ENCODE measurements at regions of chr1 and their contacts with region 1.

Region 1: DNA sequence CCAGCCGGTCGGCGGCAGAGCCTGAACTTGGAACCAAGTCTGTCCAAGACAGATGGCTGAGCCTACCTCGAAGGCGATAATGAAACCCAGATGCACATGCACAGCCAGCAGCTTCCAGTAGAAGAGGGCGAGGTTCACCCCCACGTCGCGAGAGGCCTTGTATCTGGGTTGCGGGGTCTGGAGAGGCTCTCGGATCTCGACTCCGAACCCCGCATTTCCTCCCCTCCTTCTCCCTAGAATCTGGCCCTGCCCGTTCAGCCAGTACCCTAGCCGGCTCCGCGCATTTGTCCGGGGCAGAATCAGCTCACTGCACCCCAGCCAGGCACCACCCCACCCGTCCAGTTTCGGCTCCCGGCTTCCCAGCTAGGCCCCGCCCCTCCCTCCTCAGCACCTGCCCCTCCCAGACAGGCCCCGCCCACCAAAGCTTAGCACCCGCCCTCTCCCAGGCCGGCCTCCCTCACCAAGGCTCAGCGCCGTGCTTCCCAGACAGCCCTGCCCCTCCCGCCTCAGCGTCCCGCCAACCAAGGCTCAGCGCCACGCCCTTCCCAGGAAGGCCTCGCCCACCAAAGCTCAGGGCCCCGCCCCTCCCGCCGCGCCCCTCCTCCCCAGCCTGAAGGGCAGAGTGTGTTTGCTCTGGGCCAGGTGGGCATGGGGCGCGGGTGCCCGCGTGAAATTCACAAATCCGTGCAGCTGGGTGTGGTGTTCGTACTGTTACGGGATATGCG is 4.8 kb upstream of the ARHGEF19 start:
- DNase-seq: peak; percentile 84 to 98 (median 93)
- ATAC-seq: peak; percentile 97
- H3K4me3 ChIP-seq: peak overlapping the region; percentile 74
- H3K4me3 Mint-ChIP-seq: peak overlapping the region; percentile 89
- H3K27ac ChIP-seq: no peak overlapping the region
- H3K27ac Mint-ChIP-seq: peak overlapping the region; percentile 50
- H3K4me1 ChIP-seq: peaks cover 28% of the 10 kb centered on the region
- H3K4me1 Mint-ChIP-seq: peaks cover 29% of the 10 kb centered on the region
- H3K27me3 ChIP-seq: peaks cover 0 to 2% of the 10 kb centered on the region in 2 experiments
- H3K27me3 Mint-ChIP-seq: no peaks in the 10 kb centered on the region
- CTCF ChIP-seq: no peak

Region 2: DNA sequence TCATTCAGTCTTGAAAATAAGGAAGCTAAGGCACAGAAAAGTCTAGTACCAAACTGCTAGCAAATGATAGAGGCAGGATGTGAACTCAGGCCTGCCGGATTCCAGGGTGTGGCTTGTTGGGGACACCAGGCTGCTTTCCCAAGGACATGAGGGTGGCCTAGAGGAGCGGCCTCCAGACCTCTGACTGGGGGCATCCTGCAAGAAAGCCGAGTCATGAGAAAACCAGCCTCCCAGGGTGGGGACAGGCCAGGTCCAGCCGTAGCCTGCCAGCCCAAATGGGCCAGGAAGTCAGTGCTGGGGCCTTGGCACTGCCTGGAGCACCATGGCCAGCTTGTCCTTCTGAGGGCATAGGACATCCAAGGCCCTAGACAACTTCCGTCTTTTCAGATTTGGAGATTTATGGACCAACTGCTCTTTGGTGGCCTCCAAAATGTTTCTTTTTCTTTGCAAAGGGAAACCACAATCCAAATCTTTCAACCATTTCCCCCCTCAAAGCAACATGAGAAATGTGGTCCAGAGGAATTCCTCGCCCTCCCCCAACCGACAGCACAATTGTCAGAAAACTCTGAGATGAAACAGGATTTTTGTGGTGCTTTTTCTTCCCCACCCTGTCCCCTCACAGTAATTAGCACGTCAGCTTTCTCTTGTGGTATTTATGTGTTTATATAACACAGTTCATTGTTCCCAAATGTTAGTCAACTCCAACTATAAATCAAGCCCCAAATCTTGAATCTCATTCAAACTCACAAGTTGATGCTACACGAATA is 1406.4 kb before region 1 on chr1:
- CTCF ChIA-PET with region 1: no interaction called
- POLR2A ChIA-PET with region 1: no interaction called
- intact Hi-C with region 1: no loop called
- DNase-seq: no peak
- ATAC-seq: no peak
- H3K4me3 ChIP-seq: no peak overlapping the region
- H3K4me3 Mint-ChIP-seq: no peak overlapping the region
- H3K27ac ChIP-seq: no peak overlapping the region
- H3K27ac Mint-ChIP-seq: no peak overlapping the region
- H3K4me1 ChIP-seq: no peaks in the 10 kb centered on the region
- H3K4me1 Mint-ChIP-seq: no peaks in the 10 kb centered on the region
- H3K27me3 ChIP-seq: peaks cover 0 to 3% of the 10 kb centered on the region in 2 experiments
- H3K27me3 Mint-ChIP-seq: no peaks in the 10 kb centered on the region
- CTCF ChIP-seq: no peak

Region 3: DNA sequence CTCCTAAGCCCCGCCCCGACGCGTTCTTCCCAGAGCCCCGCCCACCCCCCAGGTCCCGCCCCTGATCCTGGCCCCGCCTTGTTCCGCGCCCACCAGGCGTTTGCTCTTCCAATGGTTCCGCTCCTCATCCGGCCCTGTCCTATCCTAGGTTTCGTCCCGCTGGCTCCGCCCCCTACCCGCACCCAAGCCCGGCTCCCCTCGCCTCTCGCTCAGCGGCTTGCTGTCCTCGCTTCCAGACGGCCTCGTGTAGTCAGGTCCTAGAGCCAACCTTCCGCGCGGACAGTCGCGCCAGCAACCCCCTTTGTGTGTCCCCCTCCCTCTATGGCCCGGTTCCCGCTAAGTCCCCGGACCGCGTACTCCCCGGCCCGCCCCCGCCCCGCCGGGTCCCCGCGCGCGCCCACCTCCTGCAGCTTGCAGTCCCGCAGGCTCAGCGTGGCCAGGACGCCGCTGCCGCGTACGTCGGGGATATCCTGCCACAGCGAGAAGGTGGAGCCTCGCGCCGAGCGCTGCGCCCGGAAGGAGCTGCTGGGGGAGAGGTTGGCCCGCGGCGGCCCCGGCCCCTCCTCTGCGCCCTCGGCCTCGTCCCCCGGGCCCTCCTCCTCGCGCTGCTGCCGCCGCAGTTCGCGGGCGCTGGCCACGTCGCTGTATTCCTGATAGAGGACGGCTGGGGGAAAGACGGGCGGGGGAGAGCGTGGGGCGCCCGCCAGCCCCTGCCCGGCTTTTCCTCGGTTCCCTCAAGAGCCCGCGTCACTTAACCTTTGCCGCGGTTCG is 10.5 kb before region 1 on chr1:
- CTCF ChIA-PET with region 1: interaction called, 4 read pairs
- POLR2A ChIA-PET with region 1: interaction called, 46 read pairs
- intact Hi-C with region 1: loop called in 1 of 2 experiments (anchors 1 kb)
- DNase-seq: peak; percentile 85 to 98 (median 91)
- ATAC-seq: peak; percentile 88
- H3K4me3 ChIP-seq: peak overlapping the region; percentile 75
- H3K4me3 Mint-ChIP-seq: peak overlapping the region; percentile 93
- H3K27ac ChIP-seq: peak overlapping the region; percentile 60 to 86
- H3K27ac Mint-ChIP-seq: peak overlapping the region; percentile 95
- H3K4me1 ChIP-seq: peaks cover 25% of the 10 kb centered on the region
- H3K4me1 Mint-ChIP-seq: peaks cover 12% of the 10 kb centered on the region
- H3K27me3 ChIP-seq: no peaks in the 10 kb centered on the region
- H3K27me3 Mint-ChIP-seq: no peaks in the 10 kb centered on the region
- CTCF ChIP-seq: no peak

Region 4: DNA sequence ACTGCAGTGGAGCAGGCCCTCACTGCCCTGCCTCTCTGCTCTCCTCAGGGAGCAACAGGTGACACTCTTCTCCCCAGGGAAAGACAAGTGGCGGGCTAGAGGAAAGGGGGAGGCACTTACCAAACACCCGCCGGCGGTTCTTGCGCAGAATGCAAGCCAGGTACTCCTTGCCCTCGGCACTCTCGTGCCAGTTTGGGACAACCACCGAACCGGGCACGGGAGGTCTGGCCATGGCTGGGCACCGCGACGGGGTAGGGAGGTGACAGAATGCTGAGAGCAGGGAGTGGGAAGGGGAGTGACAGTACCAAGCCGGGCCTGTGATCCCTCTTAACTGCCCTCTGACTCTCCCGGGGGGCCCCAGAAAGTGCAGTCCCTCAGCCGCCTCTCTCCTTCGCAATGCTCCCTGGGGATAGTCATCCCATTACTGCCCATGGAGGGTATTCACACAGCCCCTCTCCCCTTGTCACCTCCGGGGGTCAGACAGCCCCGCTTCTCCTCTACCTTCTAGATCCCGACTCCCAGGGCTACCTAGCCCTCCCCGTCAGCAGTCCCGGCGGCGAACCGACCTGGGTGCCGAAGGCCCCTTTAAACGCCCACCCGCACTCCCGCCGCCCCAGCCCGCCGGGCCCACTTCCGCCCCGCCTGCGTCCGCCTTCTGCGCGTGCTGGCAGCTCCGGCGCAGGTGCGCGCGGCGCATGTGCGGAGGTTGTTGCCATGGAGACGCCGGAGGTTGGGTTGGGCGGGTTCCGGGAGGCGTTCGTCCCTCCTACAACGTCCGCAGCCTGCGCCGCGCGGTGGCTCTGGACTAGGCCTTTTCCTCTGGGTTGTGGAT is 19.5 kb after region 1 on chr1 and contains the start of gene CPLANE2:
- CTCF ChIA-PET with region 1: no interaction called
- POLR2A ChIA-PET with region 1: interaction called, 34 read pairs
- intact Hi-C with region 1: loop called in 1 of 2 experiments (anchors 1 kb)
- DNase-seq: peak; percentile 93 to 98 (median 95)
- ATAC-seq: peak; percentile 78
- H3K4me3 ChIP-seq: peak within 1 kb of the TSS; percentile 85
- H3K4me3 Mint-ChIP-seq: peak within 1 kb of the TSS; percentile 93
- H3K27ac ChIP-seq: peak within 1 kb of the TSS; percentile 66 to 84
- H3K27ac Mint-ChIP-seq: peak within 1 kb of the TSS; percentile 84
- H3K4me1 ChIP-seq: peaks cover 23% of the 10 kb centered on the region
- H3K4me1 Mint-ChIP-seq: peaks cover 22% of the 10 kb centered on the region
- H3K27me3 ChIP-seq: no peaks in the 10 kb centered on the region
- H3K27me3 Mint-ChIP-seq: no peaks in the 10 kb centered on the region
- CTCF ChIP-seq: peak; percentile 11
- total RNA-seq, gene CPLANE2: 5.3 to 8.4 TPM

Region 5: DNA sequence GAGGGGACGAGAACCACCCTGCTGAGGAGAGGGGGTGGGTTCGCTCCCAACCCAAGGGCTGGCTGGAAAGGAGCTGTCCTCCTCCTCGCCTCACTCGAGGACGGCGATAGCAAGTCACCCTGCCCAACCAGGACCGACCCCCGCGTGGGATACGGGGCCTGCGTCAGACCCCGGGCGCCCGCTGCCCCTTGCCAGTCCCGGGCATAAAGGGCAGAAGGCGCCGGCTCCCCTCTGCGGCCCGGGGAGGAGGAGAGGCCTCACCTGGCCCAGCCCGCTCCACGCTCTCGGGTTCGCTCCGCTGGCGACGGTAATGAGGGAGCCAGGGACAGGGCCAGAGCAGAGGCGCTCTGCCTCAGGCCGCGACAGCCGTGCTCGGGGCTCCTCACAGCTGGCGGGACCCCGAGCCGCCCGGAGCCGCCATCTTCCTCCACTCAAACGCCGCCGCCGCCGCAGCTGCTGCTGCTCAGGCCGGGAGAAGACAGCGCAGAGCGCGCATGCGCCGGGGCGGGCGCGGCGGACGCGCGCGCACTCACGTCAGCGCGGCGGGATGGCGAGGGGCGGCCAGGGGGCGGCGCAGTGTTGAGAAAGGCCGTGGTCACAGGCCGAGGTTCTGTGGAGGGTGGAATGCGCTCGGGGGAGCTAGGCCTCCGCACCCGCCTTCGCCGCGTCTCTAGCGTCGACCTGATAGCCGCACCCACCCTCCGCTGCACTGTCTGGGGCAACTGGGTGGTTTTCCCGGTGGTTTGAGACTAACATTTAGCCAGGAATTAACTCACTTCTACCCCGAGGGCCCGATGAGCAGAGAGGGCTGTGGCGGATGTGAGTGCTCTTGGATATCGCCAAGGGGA is 135.0 kb after region 1 on chr1 and contains the start of gene FBXO42:
- CTCF ChIA-PET with region 1: no interaction called
- POLR2A ChIA-PET with region 1: interaction called, 6 read pairs
- intact Hi-C with region 1: loop called in 1 of 2 experiments (anchors 5 kb)
- DNase-seq: peak; percentile 82 to 98 (median 91)
- ATAC-seq: peak; percentile 90
- H3K4me3 ChIP-seq: peak within 1 kb of the TSS; percentile 97
- H3K4me3 Mint-ChIP-seq: peak within 1 kb of the TSS; percentile 97
- H3K27ac ChIP-seq: peak within 1 kb of the TSS; percentile 83 to 89
- H3K27ac Mint-ChIP-seq: peak within 1 kb of the TSS; percentile 93
- H3K4me1 ChIP-seq: peaks cover 30% of the 10 kb centered on the region
- H3K4me1 Mint-ChIP-seq: peaks cover 34% of the 10 kb centered on the region
- H3K27me3 ChIP-seq: no peaks in the 10 kb centered on the region
- H3K27me3 Mint-ChIP-seq: no peaks in the 10 kb centered on the region
- CTCF ChIP-seq: peak; percentile 52
- total RNA-seq, gene FBXO42: 14.3 to 14.9 TPM

Region 6: DNA sequence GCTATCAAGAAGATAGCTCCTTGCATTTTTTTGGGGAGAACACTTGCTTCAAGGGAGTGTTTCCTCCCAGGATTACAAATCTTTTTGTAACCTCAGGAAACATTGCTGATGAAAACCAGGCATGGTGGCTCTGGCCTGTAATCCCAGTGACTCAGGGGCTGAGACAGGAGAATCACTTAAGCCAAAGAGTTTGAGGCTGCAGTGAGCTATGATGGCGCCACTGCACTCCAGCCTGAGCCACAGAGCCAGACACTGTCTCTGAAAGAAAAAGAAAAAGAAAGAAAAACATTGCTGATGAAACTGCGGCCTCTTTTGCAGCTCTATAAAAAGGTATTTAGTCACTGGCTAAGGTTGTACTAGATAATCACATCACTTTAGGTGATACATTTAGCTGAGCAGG is 685.8 kb after region 1 on chr1:
- CTCF ChIA-PET with region 1: no interaction called
- POLR2A ChIA-PET with region 1: no interaction called
- intact Hi-C with region 1: no loop called
- DNase-seq: peak in 2 of 14 experiments; percentile 20 to 42
- ATAC-seq: no peak
- H3K4me3 ChIP-seq: no peak overlapping the region
- H3K4me3 Mint-ChIP-seq: no peak overlapping the region
- H3K27ac ChIP-seq: peak overlapping the region; percentile 98 to 99
- H3K27ac Mint-ChIP-seq: no peak overlapping the region
- H3K4me1 ChIP-seq: peaks cover 55% of the 10 kb centered on the region
- H3K4me1 Mint-ChIP-seq: peaks cover 39% of the 10 kb centered on the region
- H3K27me3 ChIP-seq: no peaks in the 10 kb centered on the region
- H3K27me3 Mint-ChIP-seq: no peaks in the 10 kb centered on the region
- CTCF ChIP-seq: no peak

Measured in CD4-positive, alpha-beta T cell (primary cell).